Naive thymus-derived CD4-positive, alpha-beta T cell (primary cell): ENCODE measurements at regions of chr19 and their contacts with region 1.

Region 1: GRCh38 chr19:45092747-45093678 is at the start of gene PPP1R37:
- DNase-seq: peak; percentile 81 to 97 (median 92)
- ATAC-seq: peak; percentile 85
- H3K4me3 ChIP-seq: peak within 1 kb of the TSS; percentile 75
- H3K4me3 Mint-ChIP-seq: peak within 1 kb of the TSS; percentile 87 to 99 (median 96)
- H3K27ac ChIP-seq: peak within 1 kb of the TSS; percentile 90
- H3K27ac Mint-ChIP-seq: peak within 1 kb of the TSS; percentile 96 to 100 (median 98)
- H3K4me1 ChIP-seq: peaks cover 33 to 46% of the 10 kb centered on the region in 2 donors
- H3K4me1 Mint-ChIP-seq: peaks cover 56 to 81% (median 60%) of the 10 kb centered on the region in 7 donors
- H3K27me3 ChIP-seq: no peaks in the 10 kb centered on the region
- H3K27me3 Mint-ChIP-seq: no peaks in the 10 kb centered on the region
- total RNA-seq, gene PPP1R37: 20.0 to 28.3 (median 21.9) TPM

Region 2: DNA sequence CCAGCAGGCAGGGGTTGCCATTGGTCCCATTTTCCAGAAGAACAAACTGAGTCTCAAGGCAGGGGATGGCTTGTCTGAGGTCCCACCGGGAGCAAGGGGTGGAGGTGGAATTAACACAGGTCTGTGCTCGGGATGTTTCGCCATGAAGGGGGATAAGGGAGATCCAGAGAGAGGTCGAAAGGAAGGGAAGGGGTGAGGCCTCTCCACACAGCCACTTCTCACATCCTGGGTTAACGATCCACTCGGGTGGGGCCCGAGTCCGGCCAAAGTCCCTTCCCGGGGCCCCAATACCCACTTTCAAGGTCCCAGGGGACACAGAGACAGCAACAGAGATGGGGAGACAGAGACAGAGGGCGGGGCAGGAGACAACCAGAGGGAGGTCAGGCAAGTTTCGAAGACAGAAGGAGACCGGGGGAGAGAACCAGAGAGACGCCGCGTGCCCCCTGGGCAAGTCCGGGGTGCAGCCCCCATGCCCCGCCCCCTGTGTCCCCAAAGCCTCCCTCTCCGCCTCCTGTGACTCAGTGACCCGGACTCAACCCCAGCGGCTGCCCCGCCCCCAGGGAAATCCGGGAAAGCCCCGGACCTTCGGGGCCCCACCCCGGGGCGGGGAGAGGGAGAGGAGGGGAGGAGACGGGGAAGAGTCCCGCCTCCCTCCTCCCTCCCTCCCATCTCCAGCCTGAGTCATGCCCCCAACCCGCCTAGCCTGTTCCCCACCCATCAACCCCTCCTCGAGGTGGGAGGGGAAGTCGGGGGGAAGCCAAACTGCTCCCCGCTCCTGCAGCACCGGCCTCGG is 345.9 kb before region 1 on chr19:
- CTCF ChIA-PET with region 1: no interaction called
- POLR2A ChIA-PET with region 1: no interaction called
- intact Hi-C with region 1: loop called in 1 of 2 experiments (anchors 5 kb)
- DNase-seq: peak; percentile 51 to 97 (median 61)
- ATAC-seq: peak; percentile 83
- H3K4me3 ChIP-seq: peak overlapping the region; percentile 91
- H3K4me3 Mint-ChIP-seq: peak overlapping the region; percentile 90 to 99 (median 92)
- H3K27ac ChIP-seq: peak overlapping the region; percentile 97
- H3K27ac Mint-ChIP-seq: peak overlapping the region; percentile 87 to 99 (median 94)
- H3K4me1 ChIP-seq: peaks cover 23 to 33% of the 10 kb centered on the region in 2 donors
- H3K4me1 Mint-ChIP-seq: peaks cover 35 to 56% (median 55%) of the 10 kb centered on the region in 7 donors
- H3K27me3 ChIP-seq: no peaks in the 10 kb centered on the region
- H3K27me3 Mint-ChIP-seq: peaks cover 0 to 3% (median 0%) of the 10 kb centered on the region in 5 donors

Region 3: DNA sequence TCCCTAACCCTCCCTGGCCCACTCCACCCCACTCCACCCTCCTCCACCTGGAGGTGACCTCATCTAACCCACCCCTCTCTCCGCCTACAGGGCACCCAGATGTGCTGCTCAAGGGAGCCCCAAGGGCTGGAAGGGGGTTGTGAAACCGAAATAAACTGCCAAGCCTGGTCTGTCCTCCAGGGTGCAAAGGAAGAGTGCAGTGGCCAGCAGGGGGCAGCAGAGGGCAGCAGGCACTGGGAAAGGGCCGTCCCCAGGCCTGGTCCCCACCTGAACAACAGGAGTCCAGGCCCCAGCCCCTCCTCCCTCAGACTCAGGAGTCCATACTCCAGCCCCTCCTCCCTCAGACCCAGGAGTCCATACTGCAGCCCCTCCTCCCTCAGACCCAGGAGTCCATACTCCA is 292.6 kb before region 1 on chr19:
- CTCF ChIA-PET with region 1: no interaction called
- POLR2A ChIA-PET with region 1: no interaction called
- intact Hi-C with region 1: no loop called
- DNase-seq: peak; percentile 58 to 89 (median 75)
- ATAC-seq: peak; percentile 99
- H3K4me3 ChIP-seq: no peak overlapping the region
- H3K4me3 Mint-ChIP-seq: no peak overlapping the region
- H3K27ac ChIP-seq: no peak overlapping the region
- H3K27ac Mint-ChIP-seq: no peak overlapping the region
- H3K4me1 ChIP-seq: peaks cover 0 to 8% of the 10 kb centered on the region in 2 donors
- H3K4me1 Mint-ChIP-seq: peaks cover 0 to 27% (median 13%) of the 10 kb centered on the region in 7 donors
- H3K27me3 ChIP-seq: no peaks in the 10 kb centered on the region
- H3K27me3 Mint-ChIP-seq: no peaks in the 10 kb centered on the region

Region 4: DNA sequence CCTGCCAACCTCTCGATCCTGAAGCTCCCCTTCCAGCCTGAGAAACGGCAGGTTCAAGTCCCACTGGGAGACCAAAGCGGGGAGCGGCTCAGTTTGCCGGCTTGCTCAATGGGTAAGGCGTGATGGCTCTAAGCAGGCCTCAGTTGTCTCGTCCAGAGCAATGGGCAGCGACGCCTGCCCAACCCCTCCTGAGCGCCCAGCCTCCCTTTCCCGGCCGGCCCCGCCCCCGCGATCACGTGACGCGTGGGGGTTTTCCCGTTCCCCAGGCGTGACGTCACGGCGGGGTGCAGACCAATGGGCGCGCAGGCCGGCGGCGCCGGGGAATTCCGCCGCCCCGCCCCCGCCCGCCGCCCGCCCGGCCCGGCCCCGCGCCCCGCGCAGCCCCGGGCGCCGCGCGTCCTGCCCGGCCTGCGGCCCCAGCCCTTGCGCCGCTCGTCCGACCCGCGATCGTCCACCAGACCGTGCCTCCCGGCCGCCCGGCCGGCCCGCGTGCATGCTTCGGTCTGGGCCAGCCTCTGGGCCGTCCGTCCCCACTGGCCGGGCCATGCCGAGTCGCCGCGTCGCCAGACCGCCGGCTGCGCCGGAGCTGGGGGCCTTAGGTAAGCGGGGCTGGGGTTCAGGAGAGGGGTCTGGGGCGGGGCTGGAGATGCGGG is 91.8 kb before region 1 on chr19 and contains the start of gene RELB:
- CTCF ChIA-PET with region 1: no interaction called
- POLR2A ChIA-PET with region 1: interaction called, 9 read pairs
- intact Hi-C with region 1: loop called (anchors 1 kb)
- DNase-seq: peak; percentile 90 to 100 (median 94)
- ATAC-seq: peak; percentile 75
- H3K4me3 ChIP-seq: peak within 1 kb of the TSS; percentile 92
- H3K4me3 Mint-ChIP-seq: peak within 1 kb of the TSS; percentile 91 to 100 (median 96)
- H3K27ac ChIP-seq: peak within 1 kb of the TSS; percentile 100
- H3K27ac Mint-ChIP-seq: peak within 1 kb of the TSS; percentile 93 to 100 (median 100)
- H3K4me1 ChIP-seq: peaks cover 8 to 13% of the 10 kb centered on the region in 2 donors
- H3K4me1 Mint-ChIP-seq: peaks cover 8 to 25% (median 14%) of the 10 kb centered on the region in 7 donors
- H3K27me3 ChIP-seq: no peaks in the 10 kb centered on the region
- H3K27me3 Mint-ChIP-seq: no peaks in the 10 kb centered on the region
- total RNA-seq, gene RELB: 30.7 to 87.3 (median 71.3) TPM

Region 5: GRCh38 chr19:45069056-45069455 is 24.0 kb before region 1 on chr19:
- CTCF ChIA-PET with region 1: no interaction called
- POLR2A ChIA-PET with region 1: no interaction called
- intact Hi-C with region 1: no loop called
- DNase-seq: no peak
- ATAC-seq: no peak
- H3K4me3 ChIP-seq: no peak overlapping the region
- H3K4me3 Mint-ChIP-seq: no peak overlapping the region
- H3K27ac ChIP-seq: no peak overlapping the region
- H3K27ac Mint-ChIP-seq: peak overlapping the region in 2 of 9 donors; percentile 43 to 62
- H3K4me1 ChIP-seq: no peaks in the 10 kb centered on the region
- H3K4me1 Mint-ChIP-seq: no peaks in the 10 kb centered on the region
- H3K27me3 ChIP-seq: no peaks in the 10 kb centered on the region
- H3K27me3 Mint-ChIP-seq: no peaks in the 10 kb centered on the region

Region 6: GRCh38 chr19:45079063-45079910 is 13.7 kb before region 1 on chr19 and contains the start of gene GEMIN7:
- CTCF ChIA-PET with region 1: no interaction called
- POLR2A ChIA-PET with region 1: interaction called, 21 read pairs
- intact Hi-C with region 1: loop called (anchors 1 kb)
- DNase-seq: peak; percentile 60 to 90 (median 75)
- ATAC-seq: peak; percentile 76
- H3K4me3 ChIP-seq: peak within 1 kb of the TSS; percentile 99
- H3K4me3 Mint-ChIP-seq: peak within 1 kb of the TSS; percentile 87 to 99 (median 94)
- H3K27ac ChIP-seq: peak within 1 kb of the TSS; percentile 86
- H3K27ac Mint-ChIP-seq: peak within 1 kb of the TSS; percentile 79 to 94 (median 84)
- H3K4me1 ChIP-seq: peaks cover 22 to 31% of the 10 kb centered on the region in 2 donors
- H3K4me1 Mint-ChIP-seq: peaks cover 32 to 53% (median 48%) of the 10 kb centered on the region in 7 donors
- H3K27me3 ChIP-seq: no peaks in the 10 kb centered on the region
- H3K27me3 Mint-ChIP-seq: no peaks in the 10 kb centered on the region
- total RNA-seq, gene GEMIN7: 4.9 to 31.6 (median 16.6) TPM

Region 7: GRCh38 chr19:45125926-45126493 is 33.0 kb after region 1 on chr19:
- CTCF ChIA-PET with region 1: interaction called, 3 read pairs
- POLR2A ChIA-PET with region 1: interaction called, 4 read pairs
- intact Hi-C with region 1: loop called (anchors 2 to 5 kb)
- DNase-seq: peak; percentile 37 to 74 (median 58)
- ATAC-seq: peak; percentile 93
- H3K4me3 ChIP-seq: no peak overlapping the region
- H3K4me3 Mint-ChIP-seq: no peak overlapping the region
- H3K27ac ChIP-seq: no peak overlapping the region
- H3K27ac Mint-ChIP-seq: no peak overlapping the region
- H3K4me1 ChIP-seq: peaks cover 4 to 10% of the 10 kb centered on the region in 2 donors
- H3K4me1 Mint-ChIP-seq: peaks cover 13 to 40% (median 27%) of the 10 kb centered on the region in 7 donors
- H3K27me3 ChIP-seq: no peaks in the 10 kb centered on the region
- H3K27me3 Mint-ChIP-seq: no peaks in the 10 kb centered on the region

Region 8: DNA sequence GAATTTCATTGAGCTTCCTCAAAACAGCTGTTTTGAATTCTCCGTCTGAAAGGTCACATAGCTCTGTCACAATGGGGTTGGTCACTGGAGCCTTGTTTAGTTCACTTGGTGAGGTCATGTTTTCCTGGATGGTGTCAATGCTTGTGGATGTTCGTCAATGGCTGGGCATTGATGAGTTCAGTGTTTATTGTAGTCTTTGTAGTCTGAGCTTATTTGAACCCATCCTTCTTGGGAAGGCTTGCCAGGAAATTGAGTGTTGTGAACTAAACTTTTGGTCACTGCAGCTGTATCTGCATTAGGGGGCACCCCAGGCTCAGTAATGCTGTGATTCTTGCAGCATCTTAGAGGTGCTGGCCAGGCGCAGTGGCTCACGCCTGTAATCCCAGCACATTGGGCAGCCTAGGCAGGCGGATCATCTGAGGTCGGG is 107.6 kb after region 1 on chr19:
- CTCF ChIA-PET with region 1: no interaction called
- POLR2A ChIA-PET with region 1: no interaction called
- intact Hi-C with region 1: no loop called
- DNase-seq: no peak
- ATAC-seq: no peak
- H3K4me3 ChIP-seq: no peak overlapping the region
- H3K4me3 Mint-ChIP-seq: no peak overlapping the region
- H3K27ac ChIP-seq: no peak overlapping the region
- H3K27ac Mint-ChIP-seq: no peak overlapping the region
- H3K4me1 ChIP-seq: no peaks in the 10 kb centered on the region
- H3K4me1 Mint-ChIP-seq: no peaks in the 10 kb centered on the region
- H3K27me3 ChIP-seq: no peaks in the 10 kb centered on the region
- H3K27me3 Mint-ChIP-seq: peaks cover 0 to 6% (median 0%) of the 10 kb centered on the region in 5 donors

Region 9: GRCh38 chr19:45250832-45251451 is 157.9 kb after region 1 on chr19 and contains the start of gene MARK4:
- CTCF ChIA-PET with region 1: no interaction called
- POLR2A ChIA-PET with region 1: no interaction called
- intact Hi-C with region 1: loop called in 1 of 2 experiments (anchors 5 kb)
- DNase-seq: peak in 8 of 9 donors; percentile 32 to 70 (median 51)
- ATAC-seq: peak; percentile 80
- H3K4me3 ChIP-seq: peak within 1 kb of the TSS; percentile 63
- H3K4me3 Mint-ChIP-seq: peak within 1 kb of the TSS; percentile 87 to 96 (median 94)
- H3K27ac ChIP-seq: peak within 1 kb of the TSS; percentile 72
- H3K27ac Mint-ChIP-seq: peak within 1 kb of the TSS; percentile 28 to 90 (median 81)
- H3K4me1 ChIP-seq: peaks cover 19 to 20% of the 10 kb centered on the region in 2 donors
- H3K4me1 Mint-ChIP-seq: peaks cover 23 to 42% (median 35%) of the 10 kb centered on the region in 7 donors
- H3K27me3 ChIP-seq: no peaks in the 10 kb centered on the region
- H3K27me3 Mint-ChIP-seq: peaks cover 0 to 5% (median 0%) of the 10 kb centered on the region in 5 donors
- total RNA-seq, gene MARK4: 22.4 to 39.2 (median 25.5) TPM